ENCODE measurements at regions of chr1 and their contacts with region 1.

Region 1: DNA sequence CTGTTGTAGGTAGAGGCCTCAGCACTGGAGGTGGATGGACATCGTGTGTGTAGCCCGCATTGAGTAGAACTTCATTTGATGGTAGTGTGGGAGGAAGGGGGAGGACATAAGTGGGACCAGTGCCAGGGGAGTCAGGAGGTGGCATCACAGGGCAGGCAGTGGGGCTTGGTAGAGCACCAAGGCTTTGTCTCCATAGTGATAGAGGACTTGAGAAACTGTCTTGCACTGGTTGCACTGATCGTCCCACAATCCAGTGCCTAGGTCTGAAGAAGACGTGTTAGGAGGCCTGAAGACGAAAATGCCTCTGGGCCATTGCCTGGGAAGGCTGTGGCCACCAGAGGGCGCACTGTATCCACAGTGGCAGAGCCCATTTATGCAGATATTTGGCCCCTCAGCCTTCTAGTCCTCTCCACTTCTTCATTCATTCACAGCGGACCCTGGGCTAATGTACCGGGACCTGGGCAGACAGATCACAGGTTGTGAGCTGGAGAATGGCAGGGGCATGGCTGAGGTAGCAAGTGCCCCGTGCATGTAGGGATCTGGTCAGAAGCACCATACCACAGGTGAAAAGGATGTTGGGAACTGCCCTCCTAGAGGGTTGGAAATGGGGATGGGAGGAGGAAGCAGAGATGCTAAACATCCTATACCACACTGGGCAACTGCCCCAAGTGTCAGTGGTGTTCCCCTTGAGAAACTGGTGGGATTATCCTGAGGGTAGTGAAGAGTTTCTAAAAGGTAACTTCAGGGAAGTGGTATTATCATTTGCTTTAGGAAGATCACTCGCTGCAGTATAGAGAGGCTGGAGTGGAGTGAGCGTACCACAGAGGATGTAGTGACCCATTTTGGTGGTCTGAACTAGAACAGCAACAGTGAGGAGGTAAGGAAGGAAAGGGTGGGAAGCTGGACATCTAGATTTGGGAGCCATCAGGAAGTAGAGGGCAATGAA is 95.3 kb downstream of the PIK3R3 start:
- DNase-seq: peak; percentile 55
- ATAC-seq: peak; percentile 73
- H3K4me3 ChIP-seq: no peak overlapping the region
- H3K27ac ChIP-seq: no peak overlapping the region
- H3K4me1 ChIP-seq: no peaks in the 10 kb centered on the region
- H3K27me3 ChIP-seq: no peaks in the 10 kb centered on the region; a peak in 1 of 5 replicates
- CTCF ChIP-seq: peak; percentile 96
- EP300 ChIP-seq: no peak
- POLR2A ChIP-seq: no peak
- RAD21 ChIP-seq: peak; percentile 92

Region 2: GRCh38 chr1:45968941-45969666 is 68.1 kb before region 1 on chr1:
- CTCF ChIA-PET with region 1: no interaction called
- POLR2A ChIA-PET with region 1: no interaction called
- in situ Hi-C with region 1: no loop called
- intact Hi-C with region 1: no loop called
- DNase-seq: peak; percentile 18
- ATAC-seq: no peak; the same call in 2 of the 3 replicates
- H3K4me3 ChIP-seq: no peak overlapping the region
- H3K27ac ChIP-seq: no peak overlapping the region
- H3K4me1 ChIP-seq: peaks cover 47% of the 10 kb centered on the region
- H3K27me3 ChIP-seq: no peaks in the 10 kb centered on the region
- CTCF ChIP-seq: no peak
- EP300 ChIP-seq: no peak
- POLR2A ChIP-seq: no peak
- RAD21 ChIP-seq: no peak

Region 3: DNA sequence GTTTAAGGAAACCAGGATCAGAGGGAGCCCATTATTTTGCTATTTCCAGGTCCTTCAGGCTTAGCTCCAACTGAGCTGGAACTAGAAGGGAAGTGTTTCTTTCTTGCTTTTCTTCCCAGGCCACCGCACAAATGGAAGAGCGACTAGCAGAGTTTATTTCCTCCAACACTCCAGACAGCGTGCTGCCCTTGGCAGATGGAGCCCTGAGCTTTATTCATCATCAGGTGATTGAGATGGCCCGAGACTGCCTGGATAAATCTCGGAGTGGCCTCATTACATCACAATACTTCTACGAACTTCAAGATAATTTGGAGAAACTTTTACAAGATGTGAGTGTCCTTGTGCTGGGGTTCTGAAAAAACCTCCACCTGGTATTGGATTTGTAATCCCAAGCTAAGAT is 26.6 kb before region 1 on chr1:
- CTCF ChIA-PET with region 1: no interaction called
- POLR2A ChIA-PET with region 1: no interaction called
- in situ Hi-C with region 1: no loop called
- intact Hi-C with region 1: loop called (anchors 1 kb)
- DNase-seq: no peak
- ATAC-seq: no peak
- H3K4me3 ChIP-seq: no peak overlapping the region
- H3K27ac ChIP-seq: no peak overlapping the region
- H3K4me1 ChIP-seq: no peaks in the 10 kb centered on the region
- H3K27me3 ChIP-seq: no peaks in the 10 kb centered on the region
- CTCF ChIP-seq: no peak
- EP300 ChIP-seq: no peak
- POLR2A ChIP-seq: no peak
- RAD21 ChIP-seq: no peak

Region 4: GRCh38 chr1:46062651-46063319 is 25.6 kb after region 1 on chr1:
- CTCF ChIA-PET with region 1: no interaction called
- POLR2A ChIA-PET with region 1: no interaction called
- in situ Hi-C with region 1: no loop called
- intact Hi-C with region 1: no loop called
- DNase-seq: no peak
- ATAC-seq: no peak
- H3K4me3 ChIP-seq: peak overlapping the region in 1 of 3 experiments; percentile 25; a peak in 2 of 6 replicates
- H3K27ac ChIP-seq: no peak overlapping the region
- H3K4me1 ChIP-seq: peaks cover 22% of the 10 kb centered on the region
- H3K27me3 ChIP-seq: no peaks in the 10 kb centered on the region; a peak in 1 of 5 replicates
- CTCF ChIP-seq: no peak
- EP300 ChIP-seq: no peak
- POLR2A ChIP-seq: no peak
- RAD21 ChIP-seq: no peak

Region 5: GRCh38 chr1:46223472-46223943 is 186.3 kb after region 1 on chr1:
- CTCF ChIA-PET with region 1: interaction called, 21 read pairs
- POLR2A ChIA-PET with region 1: no interaction called
- in situ Hi-C with region 1: loop called (anchors 5 kb)
- intact Hi-C with region 1: loop called (anchors 1 kb)
- DNase-seq: peak; percentile 79
- ATAC-seq: peak; percentile 92
- H3K4me3 ChIP-seq: peak overlapping the region in 1 of 3 experiments; percentile 19; a peak in 1 of 6 replicates
- H3K27ac ChIP-seq: no peak overlapping the region
- H3K4me1 ChIP-seq: peaks cover 51% of the 10 kb centered on the region
- H3K27me3 ChIP-seq: no peaks in the 10 kb centered on the region
- CTCF ChIP-seq: peak; percentile 91
- EP300 ChIP-seq: no peak
- POLR2A ChIP-seq: no peak
- RAD21 ChIP-seq: peak; percentile 76; the same call in 1 of the 2 replicates

Measured in HepG2 (cell line).